Endothelial cell of umbilical vein (primary cell): ENCODE measurements at regions of chr7 and their contacts with region 1.

Region 1: GRCh38 chr7:75667938-75668337 is 70.8 kb downstream of the HIP1 start:
- DNase-seq: no peak
- H3K4me3 ChIP-seq: no peak overlapping the region
- H3K27ac ChIP-seq: no peak overlapping the region
- H3K4me1 ChIP-seq: peaks cover 17% of the 10 kb centered on the region
- H3K27me3 ChIP-seq: no peaks in the 10 kb centered on the region
- CTCF ChIP-seq: no peak
- POLR2A ChIP-seq: no peak

Region 2: GRCh38 chr7:75611548-75612178 is 56.3 kb before region 1 on chr7:
- CTCF ChIA-PET with region 1: no interaction called
- POLR2A ChIA-PET with region 1: no interaction called
- dilution Hi-C with region 1: no loop called
- intact Hi-C with region 1: no loop called
- DNase-seq: peak; percentile 82
- H3K4me3 ChIP-seq: no peak overlapping the region
- H3K27ac ChIP-seq: peak overlapping the region; percentile 43
- H3K4me1 ChIP-seq: peaks cover 8% of the 10 kb centered on the region
- H3K27me3 ChIP-seq: no peaks in the 10 kb centered on the region
- CTCF ChIP-seq: no peak
- POLR2A ChIP-seq: peak; percentile 22

Region 3: GRCh38 chr7:75650681-75651080 is 17.3 kb before region 1 on chr7:
- CTCF ChIA-PET with region 1: interaction called, 5 read pairs
- POLR2A ChIA-PET with region 1: no interaction called
- dilution Hi-C with region 1: no loop called
- intact Hi-C with region 1: loop called (anchors 1 kb)
- DNase-seq: peak; percentile 92
- H3K4me3 ChIP-seq: no peak overlapping the region
- H3K27ac ChIP-seq: no peak overlapping the region
- H3K4me1 ChIP-seq: peaks cover 18% of the 10 kb centered on the region
- H3K27me3 ChIP-seq: no peaks in the 10 kb centered on the region
- CTCF ChIP-seq: no peak
- POLR2A ChIP-seq: peak; percentile 30